ENCODE measurements at regions of chr18 and their contacts with region 1.

Region 1: DNA sequence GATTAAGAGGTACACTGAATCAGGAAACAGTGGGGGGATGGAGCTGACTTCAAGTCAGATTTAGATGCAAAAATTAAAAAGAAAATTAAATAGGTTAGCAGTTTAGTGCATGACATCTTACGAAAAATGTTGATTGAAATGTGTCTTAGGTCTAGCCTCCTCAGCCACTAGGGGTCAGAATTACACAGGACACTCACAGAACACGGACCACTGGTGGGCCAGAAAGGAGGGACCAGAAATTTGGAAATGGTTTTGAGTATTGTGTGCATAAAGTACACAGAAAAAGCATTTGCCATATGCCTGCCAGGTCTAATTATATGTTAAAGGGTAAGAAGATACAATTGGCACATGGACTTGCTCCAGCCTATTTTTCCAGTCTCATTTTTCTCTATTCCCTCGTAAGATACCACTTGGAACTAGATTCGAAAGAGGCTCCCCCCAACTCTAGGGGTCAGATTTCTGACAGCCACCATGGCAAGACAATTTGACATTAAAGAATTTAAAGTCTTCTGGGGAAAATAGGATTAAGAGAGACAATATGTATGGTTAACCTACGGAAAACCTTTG is 550.2 kb upstream of the SETBP1 start:
- DNase-seq: peak; percentile 9
- H3K4me3 ChIP-seq: no peak overlapping the region
- H3K27ac ChIP-seq: no peak overlapping the region
- H3K4me1 ChIP-seq: no peaks in the 10 kb centered on the region
- H3K27me3 ChIP-seq: no peaks in the 10 kb centered on the region
- CTCF ChIP-seq: peak; percentile 25 to 58 (median 54)
- POLR2A ChIP-seq: no peak

Region 2: DNA sequence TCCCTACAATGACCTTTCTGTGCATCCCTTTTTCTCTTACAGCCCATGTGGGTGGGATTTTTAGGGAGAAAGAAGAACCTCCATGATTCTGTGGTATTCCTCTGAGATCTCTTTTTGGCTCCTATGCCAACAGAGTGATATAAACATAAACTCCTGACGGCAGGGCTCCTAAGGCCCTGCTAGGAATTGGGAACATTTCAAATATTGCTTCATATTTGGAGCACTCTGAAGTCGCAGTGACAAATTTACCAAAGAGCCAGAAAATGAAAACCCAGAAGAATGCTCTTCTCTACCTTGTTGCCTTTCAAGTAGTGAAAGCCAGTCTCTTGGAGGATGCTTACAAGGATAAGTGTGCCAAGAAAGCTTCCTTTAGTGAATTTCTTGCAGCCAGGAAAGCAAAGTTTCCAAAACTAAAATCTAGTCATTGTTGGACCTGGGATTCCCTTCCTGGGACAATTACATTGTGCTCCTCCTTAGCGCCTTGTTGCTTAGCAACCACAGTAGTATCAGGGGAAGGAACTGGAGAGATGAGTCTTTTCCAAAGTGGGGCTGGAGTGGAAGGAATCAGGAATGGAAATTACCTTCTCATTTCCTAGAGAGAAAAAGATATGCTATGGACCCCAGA is 542.9 kb after region 1 on chr18:
- intact Hi-C with region 1: loop called (anchors 5 kb)
- DNase-seq: no peak
- H3K4me3 ChIP-seq: no peak overlapping the region
- H3K27ac ChIP-seq: no peak overlapping the region
- H3K4me1 ChIP-seq: no peaks in the 10 kb centered on the region
- H3K27me3 ChIP-seq: no peaks in the 10 kb centered on the region
- CTCF ChIP-seq: no peak
- POLR2A ChIP-seq: no peak